ENCODE measurements at regions of chr1 and their contacts with region 1.

Region 1: GRCh38 chr1:77143529-77144121 is 75.6 kb downstream of the PIGK start:
- DNase-seq: no peak
- H3K4me3 Mint-ChIP-seq: no peak overlapping the region
- H3K27ac Mint-ChIP-seq: no peak overlapping the region
- H3K4me1 Mint-ChIP-seq: no peaks in the 10 kb centered on the region
- H3K27me3 Mint-ChIP-seq: no peaks in the 10 kb centered on the region

Region 2: DNA sequence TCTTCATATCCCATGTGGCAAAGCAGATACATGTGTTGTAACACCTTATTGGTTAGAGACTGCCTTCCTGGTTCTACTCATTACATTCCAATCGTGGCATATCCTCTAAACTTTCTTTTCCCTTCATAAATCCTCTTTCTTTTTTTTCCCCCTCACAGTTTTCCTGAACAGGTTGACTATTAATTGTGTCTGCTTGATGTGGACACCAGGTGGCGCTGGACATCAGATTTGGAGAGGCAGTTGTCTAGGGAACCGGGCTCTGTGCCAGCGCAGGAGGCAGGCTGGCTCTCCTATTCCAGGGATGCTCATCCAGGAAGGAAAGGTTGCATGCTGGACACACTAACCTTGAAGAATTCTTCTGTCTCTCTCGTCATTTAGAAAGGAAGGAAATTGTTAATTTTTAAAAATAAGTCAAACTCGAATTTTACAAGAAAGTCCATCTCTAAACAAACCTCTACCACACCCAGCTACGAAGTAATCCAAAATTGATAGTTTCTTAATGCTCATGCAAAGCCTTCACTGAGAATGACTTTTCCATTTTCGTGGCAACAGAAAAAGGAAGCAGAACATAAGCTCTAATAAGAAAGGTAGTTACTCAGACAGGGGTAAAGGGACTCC is 1152.0 kb before region 1 on chr1:
- CTCF ChIA-PET with region 1: no interaction called
- POLR2A ChIA-PET with region 1: no interaction called
- intact Hi-C with region 1: loop called (anchors 5 kb)
- DNase-seq: peak; percentile 76
- H3K4me3 Mint-ChIP-seq: no peak overlapping the region
- H3K27ac Mint-ChIP-seq: no peak overlapping the region
- H3K4me1 Mint-ChIP-seq: no peaks in the 10 kb centered on the region
- H3K27me3 Mint-ChIP-seq: peaks cover 3% of the 10 kb centered on the region

Region 3: DNA sequence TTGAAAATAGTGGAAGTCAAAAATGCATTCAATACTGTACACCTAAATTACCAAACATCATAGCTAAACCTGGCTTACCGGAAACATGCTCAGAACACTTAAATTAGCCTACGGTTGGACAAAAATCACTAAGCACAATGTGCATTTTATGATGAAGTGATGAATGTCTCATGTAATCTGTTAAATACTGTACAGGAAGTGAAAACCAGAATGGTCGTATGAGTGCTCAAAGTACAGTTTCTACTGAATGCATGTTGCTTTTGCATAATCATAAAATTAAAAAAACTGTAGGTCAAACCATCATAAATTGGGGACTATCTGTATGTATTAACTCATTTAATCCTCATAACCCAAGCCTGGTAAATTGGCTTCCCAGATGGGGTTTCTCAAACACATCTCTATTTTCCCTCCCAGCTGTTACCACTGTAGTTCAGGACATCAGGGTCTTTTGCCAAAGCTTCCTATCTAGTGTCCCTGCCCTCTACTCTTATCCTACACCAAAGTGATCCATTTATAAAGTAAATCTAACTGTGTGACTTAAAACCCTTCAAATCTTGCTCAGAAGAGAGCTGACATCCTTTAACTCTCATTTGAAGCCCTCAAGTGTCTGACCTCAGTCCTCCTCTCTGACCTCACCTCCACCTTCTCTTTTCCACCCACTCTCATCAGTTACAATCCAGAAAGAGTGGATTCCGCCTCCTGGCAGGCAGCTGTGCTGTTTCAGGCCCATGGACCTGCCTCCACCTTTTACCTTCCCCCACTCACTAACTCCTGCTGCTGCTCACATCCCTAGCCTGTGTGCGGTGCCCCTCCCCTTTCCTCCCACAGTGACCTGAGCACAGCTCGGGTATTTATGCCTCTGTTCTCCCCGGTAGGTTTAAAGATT is 632.7 kb before region 1 on chr1:
- CTCF ChIA-PET with region 1: no interaction called
- POLR2A ChIA-PET with region 1: no interaction called
- intact Hi-C with region 1: no loop called
- DNase-seq: no peak
- H3K4me3 Mint-ChIP-seq: no peak overlapping the region
- H3K27ac Mint-ChIP-seq: no peak overlapping the region
- H3K4me1 Mint-ChIP-seq: peaks cover 7% of the 10 kb centered on the region
- H3K27me3 Mint-ChIP-seq: no peaks in the 10 kb centered on the region

Region 4: GRCh38 chr1:77126307-77126706 is 17.3 kb before region 1 on chr1:
- CTCF ChIA-PET with region 1: no interaction called
- POLR2A ChIA-PET with region 1: no interaction called
- intact Hi-C with region 1: no loop called
- DNase-seq: no peak
- H3K4me3 Mint-ChIP-seq: no peak overlapping the region
- H3K27ac Mint-ChIP-seq: no peak overlapping the region
- H3K4me1 Mint-ChIP-seq: no peaks in the 10 kb centered on the region
- H3K27me3 Mint-ChIP-seq: no peaks in the 10 kb centered on the region

Region 5: GRCh38 chr1:77313491-77313890 is 169.9 kb after region 1 on chr1:
- CTCF ChIA-PET with region 1: interaction called, 4 read pairs
- POLR2A ChIA-PET with region 1: no interaction called
- intact Hi-C with region 1: loop called (anchors 2 kb)
- DNase-seq: peak; percentile 42
- H3K4me3 Mint-ChIP-seq: no peak overlapping the region
- H3K27ac Mint-ChIP-seq: no peak overlapping the region
- H3K4me1 Mint-ChIP-seq: peaks cover 23% of the 10 kb centered on the region
- H3K27me3 Mint-ChIP-seq: no peaks in the 10 kb centered on the region

Region 6: GRCh38 chr1:77473690-77474089 is 330.1 kb after region 1 on chr1:
- CTCF ChIA-PET with region 1: no interaction called
- POLR2A ChIA-PET with region 1: no interaction called
- intact Hi-C with region 1: no loop called
- DNase-seq: no peak
- H3K4me3 Mint-ChIP-seq: no peak overlapping the region
- H3K27ac Mint-ChIP-seq: no peak overlapping the region
- H3K4me1 Mint-ChIP-seq: no peaks in the 10 kb centered on the region
- H3K27me3 Mint-ChIP-seq: no peaks in the 10 kb centered on the region

Region 7: GRCh38 chr1:77533660-77534305 is 390.2 kb after region 1 on chr1:
- CTCF ChIA-PET with region 1: interaction called, 6 read pairs
- POLR2A ChIA-PET with region 1: no interaction called
- intact Hi-C with region 1: loop called (anchors 1 kb)
- DNase-seq: peak; percentile 66
- H3K4me3 Mint-ChIP-seq: no peak overlapping the region
- H3K27ac Mint-ChIP-seq: no peak overlapping the region
- H3K4me1 Mint-ChIP-seq: peaks cover 4% of the 10 kb centered on the region
- H3K27me3 Mint-ChIP-seq: no peaks in the 10 kb centered on the region

Region 8: DNA sequence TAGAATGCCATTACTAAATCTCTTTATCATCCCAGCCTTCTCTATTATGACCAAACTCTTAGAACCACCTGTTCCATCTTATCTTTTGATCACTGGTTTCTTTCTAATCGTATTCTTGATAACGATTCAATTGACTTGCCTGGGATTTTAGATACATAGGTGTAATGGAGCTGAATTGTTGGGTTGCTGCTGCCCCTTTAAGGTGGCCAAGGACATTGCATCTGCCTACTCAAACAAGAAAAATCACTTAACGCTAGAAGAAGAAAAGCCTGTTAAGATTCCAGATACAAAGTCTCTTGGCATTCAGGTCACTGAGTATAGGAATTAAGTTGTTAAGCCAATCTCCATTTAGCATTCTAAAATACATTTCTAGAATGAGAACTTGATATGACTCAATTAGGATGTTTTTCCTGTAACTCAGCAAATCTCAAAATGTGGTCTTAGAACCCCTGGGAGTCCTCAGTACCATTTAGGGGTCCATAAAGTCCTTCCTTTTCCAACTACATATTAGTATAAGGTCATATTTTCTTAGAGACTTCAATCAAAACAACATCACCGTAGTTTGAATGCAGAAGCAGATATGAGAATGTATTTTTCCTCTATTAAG is 757.2 kb after region 1 on chr1:
- CTCF ChIA-PET with region 1: no interaction called
- POLR2A ChIA-PET with region 1: no interaction called
- intact Hi-C with region 1: loop called (anchors 5 kb)
- DNase-seq: peak; percentile 27
- H3K4me3 Mint-ChIP-seq: no peak overlapping the region
- H3K27ac Mint-ChIP-seq: no peak overlapping the region
- H3K4me1 Mint-ChIP-seq: no peaks in the 10 kb centered on the region
- H3K27me3 Mint-ChIP-seq: no peaks in the 10 kb centered on the region

Region 9: GRCh38 chr1:78114034-78114956 is 970.7 kb after region 1 on chr1:
- CTCF ChIA-PET with region 1: interaction called, 3 read pairs
- POLR2A ChIA-PET with region 1: no interaction called
- intact Hi-C with region 1: loop called (anchors 5 kb)
- DNase-seq: peak; percentile 69
- H3K4me3 Mint-ChIP-seq: no peak overlapping the region
- H3K27ac Mint-ChIP-seq: no peak overlapping the region
- H3K4me1 Mint-ChIP-seq: no peaks in the 10 kb centered on the region
- H3K27me3 Mint-ChIP-seq: no peaks in the 10 kb centered on the region

Measured in activated CD4-positive, alpha-beta memory T cell treated with anti-CD3 and anti-CD28 coated beads for 36 hours (primary cell).